Naive thymus-derived CD8-positive, alpha-beta T cell (primary cell): ENCODE measurements at regions of chr19 and their contacts with region 1.

Region 1: GRCh38 chr19:19531951-19532805 is 3.5 kb downstream of the YJEFN3 start:
- DNase-seq: peak; percentile 73 to 90 (median 85)
- ATAC-seq: peak; percentile 83 to 89
- H3K4me3 Mint-ChIP-seq: peak overlapping the region in 3 of 10 donors; percentile 24 to 49 (median 28)
- H3K27ac Mint-ChIP-seq: peak overlapping the region in 7 of 10 donors; percentile 37 to 98 (median 88)
- H3K4me1 Mint-ChIP-seq: peaks cover 4 to 21% (median 17%) of the 10 kb centered on the region in 4 donors
- H3K27me3 Mint-ChIP-seq: no peaks in the 10 kb centered on the region

Region 2: DNA sequence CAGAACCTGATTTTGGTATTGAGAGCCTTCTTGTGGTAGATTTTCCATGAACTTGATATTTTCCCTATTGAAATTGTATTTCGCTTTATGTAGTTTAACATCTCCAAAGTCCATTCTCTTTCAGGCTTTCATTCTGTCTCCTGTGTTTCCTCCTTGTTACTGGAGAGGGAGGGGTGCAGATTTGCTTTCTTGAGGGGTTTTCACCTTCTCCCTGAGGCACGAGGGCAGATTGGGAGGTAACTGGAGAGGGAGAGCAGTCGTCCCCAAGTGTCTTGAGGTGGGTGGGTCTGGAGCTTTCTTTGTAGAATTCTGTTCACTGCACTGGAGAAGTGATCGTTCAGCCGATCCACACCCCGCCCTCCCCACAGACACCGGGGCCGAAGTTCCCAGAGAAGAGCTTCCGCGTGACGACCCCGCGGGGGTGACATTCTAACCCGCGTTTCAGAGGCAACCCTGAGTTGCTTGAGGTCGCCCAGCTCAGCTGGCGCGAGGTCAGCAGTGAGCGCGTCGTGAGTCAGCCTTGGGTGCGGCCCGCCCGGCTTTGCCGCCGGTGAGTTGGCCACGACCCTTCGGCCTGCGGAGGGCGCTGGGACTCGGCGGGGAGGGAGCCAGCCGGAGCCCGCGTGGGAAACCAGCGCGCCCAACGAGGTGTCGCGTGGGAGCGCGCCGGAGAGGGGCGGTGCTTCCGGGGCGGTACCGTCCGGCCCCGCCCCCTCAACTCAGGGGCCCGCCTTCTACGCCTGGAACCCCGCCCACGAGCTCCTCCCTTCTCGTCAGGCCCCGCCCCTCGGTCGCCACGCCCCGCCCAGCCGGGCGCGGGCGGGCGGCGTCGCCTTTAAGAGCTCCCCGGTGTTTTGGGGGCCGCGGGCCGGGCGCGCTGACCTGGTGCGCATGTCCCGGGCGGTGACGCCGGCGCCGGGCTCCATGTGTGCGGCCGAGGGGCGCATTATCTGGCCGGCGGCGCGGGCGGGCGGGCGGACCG is 127.0 kb before region 1 on chr19 and contains the start of gene GATAD2A:
- POLR2A ChIA-PET with region 1: no interaction called
- DNase-seq: peak; percentile 82 to 95 (median 92)
- ATAC-seq: peak; percentile 79 to 80
- H3K4me3 Mint-ChIP-seq: peak within 1 kb of the TSS; percentile 90 to 98 (median 94)
- H3K27ac Mint-ChIP-seq: peak within 1 kb of the TSS; percentile 83 to 97 (median 94)
- H3K4me1 Mint-ChIP-seq: peaks cover 37 to 72% (median 64%) of the 10 kb centered on the region in 4 donors
- H3K27me3 Mint-ChIP-seq: no peaks in the 10 kb centered on the region
- polyA plus RNA-seq, gene GATAD2A: 14.5 to 35.1 (median 20.2) TPM

Region 3: GRCh38 chr19:19515764-19516519 is 16.2 kb before region 1 on chr19 and contains the start of gene NDUFA13:
- POLR2A ChIA-PET with region 1: interaction called, 11 read pairs
- DNase-seq: peak; percentile 84 to 99 (median 93)
- ATAC-seq: peak; percentile 86 to 90
- H3K4me3 Mint-ChIP-seq: peak within 1 kb of the TSS; percentile 91 to 98 (median 96)
- H3K27ac Mint-ChIP-seq: peak within 1 kb of the TSS; percentile 91 to 98 (median 97)
- H3K4me1 Mint-ChIP-seq: peaks cover 10 to 51% (median 30%) of the 10 kb centered on the region in 4 donors
- H3K27me3 Mint-ChIP-seq: no peaks in the 10 kb centered on the region
- polyA plus RNA-seq, gene NDUFA13: 329 to 360 (median 338) TPM

Region 4: DNA sequence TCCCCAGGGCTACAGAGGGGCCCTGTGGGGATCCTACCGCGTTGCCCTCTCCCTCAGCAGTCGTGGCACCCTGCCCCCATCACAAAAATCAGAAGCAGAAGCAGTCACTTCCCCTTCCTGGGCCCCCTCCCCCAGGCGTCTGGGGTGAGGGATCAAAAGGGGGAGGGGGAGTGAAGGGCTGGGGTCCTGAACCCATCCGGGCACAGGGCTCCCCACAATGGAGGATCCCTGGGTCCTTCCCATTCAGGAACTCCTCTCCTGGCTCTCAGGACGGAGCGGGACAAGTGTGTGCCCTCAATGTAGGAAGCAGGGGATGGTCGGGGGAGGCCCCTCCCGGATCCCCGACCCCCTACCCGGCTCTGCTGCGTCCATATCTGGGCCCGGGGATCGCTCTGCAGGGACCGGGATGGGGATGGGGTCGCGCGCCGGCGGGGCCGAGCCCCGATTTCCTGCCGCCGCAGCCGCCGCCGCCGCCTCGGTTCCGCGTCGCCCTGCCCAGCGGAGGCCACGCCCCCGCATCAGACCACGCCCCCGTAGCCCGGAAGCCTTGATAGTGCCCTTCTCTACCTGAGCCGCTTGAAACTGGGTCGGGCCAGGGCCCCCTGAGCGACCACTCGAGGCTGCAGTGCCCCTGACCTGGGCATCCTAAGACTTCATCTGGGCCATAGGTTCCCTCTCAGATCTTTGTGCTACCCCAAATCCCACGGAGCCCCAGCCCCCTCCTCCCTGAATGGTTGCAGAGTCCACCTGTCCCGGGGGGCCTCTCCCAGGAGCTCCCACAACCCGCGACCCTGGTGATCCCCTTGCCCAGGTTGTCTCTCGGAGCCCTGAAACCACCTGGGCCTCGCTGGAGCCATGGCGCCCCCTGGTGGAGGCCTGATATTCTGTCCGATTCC is 111.2 kb after region 1 on chr19 and contains the start of gene GMIP:
- POLR2A ChIA-PET with region 1: interaction called, 31 read pairs
- DNase-seq: peak; percentile 77 to 94 (median 88)
- ATAC-seq: peak; percentile 91 to 92
- H3K4me3 Mint-ChIP-seq: peak within 1 kb of the TSS; percentile 96 to 99 (median 98)
- H3K27ac Mint-ChIP-seq: peak within 1 kb of the TSS; percentile 87 to 99 (median 98)
- H3K4me1 Mint-ChIP-seq: peaks cover 13 to 27% (median 20%) of the 10 kb centered on the region in 4 donors
- H3K27me3 Mint-ChIP-seq: no peaks in the 10 kb centered on the region
- polyA plus RNA-seq, gene GMIP: 40.6 to 72.4 (median 41.9) TPM

Region 5: GRCh38 chr19:19719798-19720197 is 187.6 kb after region 1 on chr19:
- POLR2A ChIA-PET with region 1: interaction called, 10 read pairs
- DNase-seq: peak in 2 of 10 donors; percentile 32 to 46
- ATAC-seq: peak; percentile 60 to 64
- H3K4me3 Mint-ChIP-seq: peak overlapping the region in 1 of 10 donors; percentile 53
- H3K27ac Mint-ChIP-seq: peak overlapping the region in 1 of 10 donors; percentile 18
- H3K4me1 Mint-ChIP-seq: peaks cover 0 to 7% (median 3%) of the 10 kb centered on the region in 4 donors
- H3K27me3 Mint-ChIP-seq: no peaks in the 10 kb centered on the region